Activated CD8-positive, alpha-beta T cell treated with anti-CD3 and anti-CD28 coated beads for 36 hours (primary cell): ENCODE measurements at regions of chr1 and their contacts with region 1.

Region 1: GRCh38 chr1:153922972-153923925 is at the start of gene GATAD2B:
- DNase-seq: peak; percentile 100
- ATAC-seq: peak; percentile 93
- H3K4me3 Mint-ChIP-seq: peak within 1 kb of the TSS; percentile 95
- H3K27ac Mint-ChIP-seq: peak within 1 kb of the TSS; percentile 97
- H3K4me1 Mint-ChIP-seq: peaks cover 38% of the 10 kb centered on the region
- H3K27me3 Mint-ChIP-seq: no peaks in the 10 kb centered on the region
- CTCF ChIP-seq: no peak
- total RNA-seq, gene GATAD2B: 59.5 to 59.8 TPM

Region 2: GRCh38 chr1:153816283-153816889 is 106.9 kb before region 1 on chr1:
- CTCF ChIA-PET with region 1: interaction called, 12 read pairs
- POLR2A ChIA-PET with region 1: no interaction called
- intact Hi-C with region 1: no loop called
- DNase-seq: no peak
- ATAC-seq: no peak
- H3K4me3 Mint-ChIP-seq: no peak overlapping the region
- H3K27ac Mint-ChIP-seq: no peak overlapping the region
- H3K4me1 Mint-ChIP-seq: no peaks in the 10 kb centered on the region
- H3K27me3 Mint-ChIP-seq: no peaks in the 10 kb centered on the region
- CTCF ChIP-seq: no peak

Region 3: DNA sequence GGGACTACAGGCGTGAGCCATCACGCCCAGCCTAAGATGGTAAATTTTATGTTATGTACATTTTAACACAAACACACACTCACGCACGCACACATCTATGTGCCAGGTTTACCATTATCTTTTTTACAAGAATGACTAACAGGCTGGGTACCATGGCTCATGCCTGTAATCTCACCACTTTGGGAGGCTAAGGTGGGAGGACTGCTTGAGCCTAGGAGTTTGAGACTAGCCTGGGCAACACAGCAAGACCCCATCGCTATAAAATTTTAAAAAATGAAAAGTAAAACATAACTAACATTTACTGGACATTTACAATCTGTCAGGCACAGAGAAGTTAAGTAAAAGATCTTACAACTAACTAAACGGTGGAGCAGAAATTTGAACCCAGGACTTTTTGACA is 15.2 kb before region 1 on chr1:
- CTCF ChIA-PET with region 1: interaction called, 18 read pairs
- POLR2A ChIA-PET with region 1: interaction called, 10 read pairs
- intact Hi-C with region 1: no loop called
- DNase-seq: no peak
- ATAC-seq: no peak
- H3K4me3 Mint-ChIP-seq: no peak overlapping the region
- H3K27ac Mint-ChIP-seq: no peak overlapping the region
- H3K4me1 Mint-ChIP-seq: peaks cover 47% of the 10 kb centered on the region
- H3K27me3 Mint-ChIP-seq: no peaks in the 10 kb centered on the region
- CTCF ChIP-seq: no peak

Region 4: GRCh38 chr1:153967082-153968000 is 44.1 kb after region 1 on chr1 and contains the start of gene CREB3L4:
- CTCF ChIA-PET with region 1: interaction called, 3 read pairs
- POLR2A ChIA-PET with region 1: interaction called, 49 read pairs
- intact Hi-C with region 1: no loop called
- DNase-seq: peak; percentile 94
- ATAC-seq: peak; percentile 88
- H3K4me3 Mint-ChIP-seq: peak within 1 kb of the TSS; percentile 99
- H3K27ac Mint-ChIP-seq: peak within 1 kb of the TSS; percentile 94
- H3K4me1 Mint-ChIP-seq: peaks cover 32% of the 10 kb centered on the region
- H3K27me3 Mint-ChIP-seq: no peaks in the 10 kb centered on the region
- CTCF ChIP-seq: peak; percentile 18
- total RNA-seq, gene CREB3L4: 8.3 to 8.8 TPM